MCF 10A (cell line): ENCODE measurements at regions of chr14 and their contacts with region 1.

Region 1: DNA sequence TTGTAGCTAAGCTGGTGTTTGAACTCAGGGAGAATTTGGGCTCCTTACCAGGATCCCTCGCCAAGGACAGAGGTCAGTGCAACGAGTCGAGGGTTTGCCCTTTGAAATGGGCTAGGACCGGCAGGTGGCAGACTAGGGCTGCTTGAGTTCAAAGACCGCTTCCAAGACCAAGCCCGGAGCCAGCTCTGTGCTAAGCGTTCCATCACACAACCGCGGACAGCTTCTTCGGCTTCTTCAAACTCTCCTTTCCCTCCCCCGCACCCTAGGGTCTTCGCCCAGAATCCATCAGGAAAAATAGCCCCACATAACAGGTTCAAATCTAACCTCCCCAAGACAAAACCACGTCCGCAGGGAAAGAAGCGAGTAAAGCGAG is 705 bp upstream of the FLVCR2 start:
- DNase-seq: peak; percentile 90
- H3K4me3 Mint-ChIP-seq: no peak overlapping the region
- H3K27ac Mint-ChIP-seq: peak overlapping the region; percentile 11
- H3K4me1 Mint-ChIP-seq: no peaks in the 10 kb centered on the region
- H3K27me3 Mint-ChIP-seq: peaks cover 14% of the 10 kb centered on the region
- CTCF ChIP-seq: peak; percentile 80

Region 2: GRCh38 chr14:75591331-75591946 is 13.7 kb after region 1 on chr14:
- CTCF ChIA-PET with region 1: interaction called, 12 read pairs
- POLR2A ChIA-PET with region 1: interaction called, 3 read pairs
- intact Hi-C with region 1: no loop called
- DNase-seq: no peak
- H3K4me3 Mint-ChIP-seq: no peak overlapping the region
- H3K27ac Mint-ChIP-seq: no peak overlapping the region
- H3K4me1 Mint-ChIP-seq: no peaks in the 10 kb centered on the region
- H3K27me3 Mint-ChIP-seq: no peaks in the 10 kb centered on the region
- CTCF ChIP-seq: no peak

Region 3: DNA sequence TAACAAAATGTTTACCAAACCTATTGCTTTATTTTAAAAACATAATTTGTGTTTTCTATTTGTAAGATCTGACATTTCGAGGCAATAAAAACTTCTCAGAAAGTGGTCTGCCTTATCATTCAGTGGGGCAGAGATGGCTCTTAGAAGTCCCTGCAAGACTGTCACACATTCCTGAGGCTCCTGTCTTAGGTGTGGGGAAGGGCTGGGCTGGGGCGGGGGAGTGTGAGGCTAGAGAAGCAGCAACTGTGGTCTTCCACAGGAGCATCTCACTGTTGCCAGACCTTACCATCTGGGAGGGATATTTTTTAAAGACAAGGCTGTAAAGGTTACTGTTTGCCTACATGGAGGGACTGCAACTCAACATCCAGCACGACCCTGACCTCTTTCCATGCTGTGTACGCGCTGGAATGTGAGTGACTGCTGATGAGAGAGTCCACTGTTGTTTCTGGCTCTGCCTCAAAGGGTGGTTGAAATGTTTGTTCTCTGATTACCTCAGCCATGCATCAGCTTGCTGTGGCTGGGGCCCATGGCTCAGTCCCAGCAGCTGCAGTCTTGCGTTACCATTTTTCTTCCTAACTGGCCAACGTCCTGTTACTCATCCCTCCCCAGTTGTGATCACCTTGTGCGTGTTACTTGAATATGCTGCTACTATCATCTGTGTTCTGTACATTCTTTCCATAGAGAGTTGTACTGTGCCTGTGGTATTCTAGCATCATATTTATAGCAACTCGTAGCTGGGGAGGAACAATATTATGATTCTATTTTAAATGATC is 70.5 kb after region 1 on chr14:
- CTCF ChIA-PET with region 1: interaction called, 470 read pairs
- POLR2A ChIA-PET with region 1: interaction called, 230 read pairs
- intact Hi-C with region 1: loop called (anchors 1 kb)
- DNase-seq: peak; percentile 94
- H3K4me3 Mint-ChIP-seq: peak overlapping the region; percentile 50
- H3K27ac Mint-ChIP-seq: peak overlapping the region; percentile 55
- H3K4me1 Mint-ChIP-seq: peaks cover 41% of the 10 kb centered on the region
- H3K27me3 Mint-ChIP-seq: no peaks in the 10 kb centered on the region
- CTCF ChIP-seq: no peak

Region 4: GRCh38 chr14:75654127-75654732 is 76.5 kb after region 1 on chr14:
- CTCF ChIA-PET with region 1: interaction called, 470 read pairs
- POLR2A ChIA-PET with region 1: interaction called, 230 read pairs
- intact Hi-C with region 1: loop called (anchors 1 kb)
- DNase-seq: peak; percentile 76
- H3K4me3 Mint-ChIP-seq: no peak overlapping the region
- H3K27ac Mint-ChIP-seq: no peak overlapping the region
- H3K4me1 Mint-ChIP-seq: peaks cover 16% of the 10 kb centered on the region
- H3K27me3 Mint-ChIP-seq: no peaks in the 10 kb centered on the region
- CTCF ChIP-seq: peak; percentile 93

Region 5: DNA sequence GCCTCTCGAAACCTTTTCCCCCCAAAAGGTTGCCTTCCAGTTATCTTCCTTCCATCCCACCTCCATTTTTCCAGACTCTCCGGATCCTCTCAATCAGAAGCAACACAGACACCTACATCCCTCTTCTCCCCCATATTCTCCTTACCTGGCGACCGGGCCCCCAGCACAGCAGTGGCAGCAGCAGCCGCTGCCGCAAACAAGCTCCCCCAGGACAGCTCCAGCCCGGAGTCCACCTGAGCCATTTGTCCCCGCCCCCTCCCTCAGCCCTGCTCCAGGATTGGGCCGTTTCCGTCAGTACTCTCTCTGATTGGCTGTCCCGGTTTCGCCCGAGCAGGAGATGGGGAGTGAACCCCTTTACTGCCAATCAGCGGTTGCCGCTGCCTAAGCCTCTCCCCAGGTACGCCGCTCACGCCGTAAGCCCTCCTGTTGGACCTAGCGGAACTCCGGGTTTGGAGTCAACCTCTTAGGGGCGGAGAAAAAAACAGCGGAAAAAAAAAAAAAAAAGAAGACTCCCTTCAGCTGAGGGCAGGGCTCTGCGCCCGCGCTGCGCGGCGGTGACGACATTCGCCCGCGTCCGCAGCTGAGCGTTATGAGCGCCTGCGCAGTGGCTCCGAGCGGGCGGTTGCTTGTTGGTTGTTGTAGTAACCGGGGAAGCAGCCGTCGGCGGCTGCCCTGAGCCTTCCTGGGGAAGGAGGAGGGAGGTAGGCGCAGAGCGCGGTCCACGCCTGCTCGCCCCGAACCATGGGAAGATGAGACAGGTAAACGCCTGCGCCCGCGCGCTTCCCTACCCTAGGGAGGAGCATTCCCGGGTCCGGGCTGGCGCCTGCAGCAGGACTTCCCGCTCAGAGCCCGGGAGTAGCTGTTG is 83.1 kb after region 1 on chr14 and contains the starts of genes ERG28 and TTLL5:
- CTCF ChIA-PET with region 1: interaction called, 470 read pairs
- POLR2A ChIA-PET with region 1: interaction called, 230 read pairs
- intact Hi-C with region 1: no loop called
- DNase-seq: peak; percentile 99
- H3K4me3 Mint-ChIP-seq: peak within 1 kb of the TSS; percentile 98
- H3K27ac Mint-ChIP-seq: peak within 1 kb of the TSS; percentile 97
- H3K4me1 Mint-ChIP-seq: peaks cover 17% of the 10 kb centered on the region
- H3K27me3 Mint-ChIP-seq: no peaks in the 10 kb centered on the region
- CTCF ChIP-seq: no peak
- total RNA-seq, gene ERG28: 10.4 and 11.1 TPM in 2 replicates
- total RNA-seq, gene TTLL5: 29.0 and 31.7 TPM in 2 replicates

Region 6: GRCh38 chr14:75960231-75960630 is 382.5 kb after region 1 on chr14:
- CTCF ChIA-PET with region 1: no interaction called
- POLR2A ChIA-PET with region 1: no interaction called
- intact Hi-C with region 1: no loop called
- DNase-seq: no peak
- H3K4me3 Mint-ChIP-seq: no peak overlapping the region
- H3K27ac Mint-ChIP-seq: no peak overlapping the region
- H3K4me1 Mint-ChIP-seq: no peaks in the 10 kb centered on the region
- H3K27me3 Mint-ChIP-seq: no peaks in the 10 kb centered on the region
- CTCF ChIP-seq: no peak

Region 7: DNA sequence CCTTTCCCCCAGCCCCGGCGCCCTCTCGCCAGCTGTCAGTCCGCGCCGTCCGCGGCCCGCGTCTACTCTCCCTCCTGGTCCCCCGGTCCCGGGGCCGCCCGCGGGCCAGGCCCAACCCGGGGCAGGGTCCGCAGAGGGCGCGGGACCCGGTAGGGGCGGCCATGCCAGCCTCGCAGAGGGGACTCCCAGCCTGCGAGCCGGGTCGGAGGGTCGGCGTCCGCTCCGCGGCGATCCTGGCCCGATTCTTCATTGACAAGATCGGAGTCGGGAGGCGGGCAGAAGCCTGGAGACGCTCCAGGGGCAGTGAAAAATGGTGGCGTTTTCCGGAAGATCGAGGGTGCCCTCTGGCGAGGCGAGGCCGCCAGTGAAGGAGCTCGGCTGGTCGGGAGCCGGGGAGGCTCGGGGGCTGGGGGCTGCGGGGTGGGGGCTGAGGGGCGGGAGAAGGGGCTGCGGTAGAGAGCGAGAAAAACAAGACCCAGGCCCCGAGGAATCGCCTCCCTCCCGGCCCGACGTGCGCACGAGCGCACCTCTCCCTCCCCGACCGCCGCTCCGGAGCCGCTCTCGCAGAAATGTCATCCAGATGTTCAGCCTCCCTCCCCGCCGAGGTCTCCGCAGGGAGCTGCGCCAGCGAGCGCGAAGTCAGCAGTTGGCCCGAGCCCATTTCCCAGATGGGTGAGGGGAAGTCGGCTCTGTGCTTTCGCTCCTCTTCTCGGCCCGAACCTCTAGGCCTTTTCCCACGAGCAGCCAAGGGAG is 404.7 kb after region 1 on chr14:
- CTCF ChIA-PET with region 1: interaction called, 10 read pairs
- POLR2A ChIA-PET with region 1: interaction called, 7 read pairs
- intact Hi-C with region 1: loop called (anchors 5 kb)
- DNase-seq: peak; percentile 81
- H3K4me3 Mint-ChIP-seq: peak overlapping the region; percentile 73
- H3K27ac Mint-ChIP-seq: peak overlapping the region; percentile 78
- H3K4me1 Mint-ChIP-seq: peaks cover 34% of the 10 kb centered on the region
- H3K27me3 Mint-ChIP-seq: no peaks in the 10 kb centered on the region
- CTCF ChIP-seq: peak; percentile 72